Lower leg skin (tissue), 4 donors: ENCODE measurements at regions of chr15 and their contacts with region 1.

Region 1: DNA sequence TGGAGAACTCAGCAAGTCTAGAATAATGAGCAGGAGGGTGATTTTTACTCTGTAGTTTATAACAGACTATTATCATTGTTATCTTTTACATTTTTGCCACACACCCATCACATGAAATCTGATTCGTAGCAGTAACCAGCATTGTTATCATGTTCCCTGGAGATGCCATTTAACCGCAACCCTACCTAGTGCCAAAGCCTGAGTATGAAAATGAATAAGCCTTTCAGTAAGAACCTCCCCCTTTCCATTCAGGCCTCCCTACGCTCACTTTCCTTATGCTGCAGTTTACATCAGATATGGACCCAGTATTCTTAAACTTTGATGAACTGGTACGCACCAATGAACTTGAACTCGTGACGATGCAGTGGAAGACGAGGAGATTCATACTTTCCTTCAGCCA is 158.7 kb upstream of the SPRED1 start:
- DNase-seq: no peak
- H3K4me3 ChIP-seq: no peak overlapping the region
- CTCF ChIP-seq: no peak
- POLR2A ChIP-seq: no peak

Region 2: DNA sequence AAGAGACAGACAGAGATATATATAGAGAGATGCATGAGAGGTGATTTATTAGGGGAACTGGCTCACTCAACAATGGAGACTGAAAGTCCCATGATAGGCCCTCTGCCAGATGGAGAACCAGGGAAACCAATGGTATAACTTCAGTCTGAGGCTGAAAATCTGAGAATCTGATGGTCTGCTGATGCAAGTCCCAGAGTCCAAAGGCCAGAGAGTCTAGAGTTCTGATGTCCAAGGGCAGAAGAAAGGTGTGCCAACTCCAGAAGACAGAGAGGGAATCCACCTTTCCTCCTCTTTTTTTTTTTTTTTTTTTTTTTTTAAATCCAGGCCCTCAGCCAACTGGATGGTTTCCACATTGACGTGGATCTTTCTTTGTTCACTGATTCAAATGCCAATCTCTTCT is 795.7 kb before region 1 on chr15:
- intact Hi-C with region 1: no loop called
- DNase-seq: no peak
- H3K4me3 ChIP-seq: no peak overlapping the region
- CTCF ChIP-seq: no peak
- POLR2A ChIP-seq: no peak

Region 3: DNA sequence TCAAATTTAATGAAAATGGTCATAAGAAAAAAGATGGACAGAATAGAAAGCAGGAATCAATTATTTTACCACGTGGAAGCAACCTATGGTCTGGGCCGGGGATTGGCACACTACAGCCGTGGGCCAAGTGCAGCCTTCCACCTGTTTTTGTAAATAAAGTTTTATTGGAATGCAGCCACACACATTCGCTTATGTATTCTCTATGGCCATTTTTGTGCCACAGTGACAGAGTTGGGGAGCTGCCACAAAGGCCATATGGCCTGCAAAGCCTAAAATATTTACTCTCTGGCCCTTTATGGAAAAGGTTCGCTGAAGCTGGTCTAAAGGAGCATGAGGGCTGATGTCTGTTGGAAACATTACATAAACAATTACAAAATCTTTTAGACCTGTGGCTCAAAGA is 14.7 kb before region 1 on chr15:
- intact Hi-C with region 1: loop called (anchors 1 kb)
- DNase-seq: no peak
- H3K4me3 ChIP-seq: no peak overlapping the region
- CTCF ChIP-seq: no peak
- POLR2A ChIP-seq: no peak

Region 4: DNA sequence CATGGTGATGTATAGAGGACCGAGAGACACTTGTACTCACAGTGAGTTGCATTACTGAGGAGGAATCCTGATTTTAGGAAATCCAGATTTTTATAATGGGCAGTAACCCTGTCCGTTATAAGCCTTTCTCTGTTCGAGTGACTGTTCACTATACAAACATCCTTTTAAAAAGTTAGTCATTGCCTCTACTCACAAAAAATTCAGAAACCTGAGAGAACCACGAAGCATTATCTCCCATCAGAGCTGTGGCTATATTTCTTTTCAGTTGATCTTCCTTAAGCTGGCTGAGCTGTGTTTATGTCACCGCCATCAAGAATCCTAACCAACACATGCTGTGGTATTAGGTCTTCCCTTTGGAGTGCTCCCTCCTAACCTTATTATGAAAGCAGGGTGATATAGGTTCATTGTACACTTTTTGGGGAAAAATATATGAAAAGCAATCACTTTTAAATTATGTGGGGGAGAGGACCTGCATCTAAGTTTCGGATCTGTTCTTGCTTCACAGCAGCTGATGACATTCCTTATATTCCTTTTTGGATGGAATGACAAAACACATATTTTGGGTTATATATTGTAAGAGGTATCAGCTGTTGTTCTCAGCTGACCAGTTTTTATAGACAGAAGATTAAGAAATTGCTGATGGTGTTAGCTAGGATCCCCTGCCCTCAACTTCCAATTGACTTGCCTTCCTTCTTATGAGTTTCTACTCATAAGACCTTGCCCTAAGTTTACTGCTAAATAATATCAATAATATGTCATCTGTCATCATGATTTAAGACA is 936.5 kb after region 1 on chr15:
- intact Hi-C with region 1: no loop called
- DNase-seq: no peak
- H3K4me3 ChIP-seq: no peak overlapping the region
- CTCF ChIP-seq: no peak
- POLR2A ChIP-seq: no peak